ENCODE measurements at regions of chr9 and their contacts with region 1.

Region 1: GRCh38 chr9:93119953-93120845 is 13.9 kb downstream of the NINJ1 start:
- DNase-seq: peak; percentile 99
- H3K4me3 ChIP-seq: peak overlapping the region in 1 of 3 experiments; percentile 49
- H3K4me3 Mint-ChIP-seq: peak overlapping the region; percentile 52 to 81
- H3K27ac ChIP-seq: peak overlapping the region; percentile 90 to 99
- H3K27ac Mint-ChIP-seq: peak overlapping the region; percentile 99 to 100 (median 100)
- H3K4me1 ChIP-seq: peaks cover 68 to 83% of the 10 kb centered on the region in 2 donors
- H3K4me1 Mint-ChIP-seq: peaks cover 65% of the 10 kb centered on the region
- H3K27me3 ChIP-seq: no peaks in the 10 kb centered on the region
- H3K27me3 Mint-ChIP-seq: peaks cover 0 to 2% (median 0%) of the 10 kb centered on the region in 3 donors
- CTCF ChIP-seq: peak; percentile 24

Region 2: DNA sequence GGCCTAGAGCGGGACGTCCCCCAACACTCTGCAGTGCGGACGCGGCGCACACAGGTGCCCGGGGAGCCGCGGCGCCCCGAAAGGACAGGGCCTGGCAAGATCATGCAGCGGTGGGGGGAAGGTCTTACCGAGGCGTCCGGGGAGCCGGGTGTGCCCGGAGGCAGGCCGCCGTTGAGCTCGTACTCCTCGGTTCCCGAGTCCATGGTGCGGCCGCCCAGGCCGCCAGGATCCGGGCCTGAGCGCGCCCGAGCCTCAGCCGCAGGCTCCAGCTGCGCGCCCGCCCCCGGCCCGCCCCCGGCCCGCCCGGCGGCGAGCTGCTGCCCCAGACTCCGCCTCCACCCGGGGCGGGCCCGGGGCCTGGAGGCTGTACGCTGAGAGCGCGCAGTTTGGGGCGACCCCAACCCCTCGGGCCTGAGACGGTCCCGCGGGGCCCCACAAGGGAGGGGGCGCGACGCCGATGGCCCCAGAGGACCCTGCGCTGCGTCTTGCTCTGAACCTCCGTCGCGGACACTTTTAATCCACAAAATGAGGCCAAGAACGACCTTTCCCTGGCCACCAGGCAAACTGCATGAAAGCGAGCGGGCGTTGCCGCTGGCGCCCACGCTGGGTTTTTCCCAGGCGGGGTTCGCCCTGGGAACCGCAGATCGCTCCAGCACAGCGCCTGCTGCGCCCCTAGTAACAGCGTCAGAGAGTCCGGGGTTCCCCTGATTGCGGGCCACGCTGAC is 14.0 kb after region 1 on chr9 and contains the start of gene NINJ1:
- intact Hi-C with region 1: loop called in 1 of 2 experiments (anchors 2 kb)
- DNase-seq: peak; percentile 93 to 98 (median 94)
- H3K4me3 ChIP-seq: peak within 1 kb of the TSS; percentile 83 to 89 (median 88)
- H3K4me3 Mint-ChIP-seq: peak within 1 kb of the TSS; percentile 92 to 94
- H3K27ac ChIP-seq: peak within 1 kb of the TSS; percentile 86 to 95
- H3K27ac Mint-ChIP-seq: peak within 1 kb of the TSS; percentile 94 to 98 (median 96)
- H3K4me1 ChIP-seq: peaks cover 64% of the 10 kb centered on the region in 2 donors
- H3K4me1 Mint-ChIP-seq: peaks cover 71% of the 10 kb centered on the region
- H3K27me3 ChIP-seq: no peaks in the 10 kb centered on the region
- H3K27me3 Mint-ChIP-seq: peaks cover 6 to 20% (median 12%) of the 10 kb centered on the region in 3 donors
- CTCF ChIP-seq: no peak
- polyA plus RNA-seq, gene NINJ1: 290 to 610 (median 469) TPM